Activated CD8-positive, alpha-beta T cell treated with anti-CD3 and anti-CD28 coated beads for 36 hours (primary cell): ENCODE measurements at regions of chr10 and their contacts with region 1.

Region 1: GRCh38 chr10:6083523-6084475 is 5.0 kb upstream of the RBM17 start:
- DNase-seq: peak; percentile 88
- ATAC-seq: peak; percentile 72
- H3K4me3 Mint-ChIP-seq: peak overlapping the region; percentile 78
- H3K27ac Mint-ChIP-seq: peak overlapping the region; percentile 94
- H3K4me1 Mint-ChIP-seq: peaks cover 68% of the 10 kb centered on the region
- H3K27me3 Mint-ChIP-seq: no peaks in the 10 kb centered on the region
- CTCF ChIP-seq: no peak

Region 2: DNA sequence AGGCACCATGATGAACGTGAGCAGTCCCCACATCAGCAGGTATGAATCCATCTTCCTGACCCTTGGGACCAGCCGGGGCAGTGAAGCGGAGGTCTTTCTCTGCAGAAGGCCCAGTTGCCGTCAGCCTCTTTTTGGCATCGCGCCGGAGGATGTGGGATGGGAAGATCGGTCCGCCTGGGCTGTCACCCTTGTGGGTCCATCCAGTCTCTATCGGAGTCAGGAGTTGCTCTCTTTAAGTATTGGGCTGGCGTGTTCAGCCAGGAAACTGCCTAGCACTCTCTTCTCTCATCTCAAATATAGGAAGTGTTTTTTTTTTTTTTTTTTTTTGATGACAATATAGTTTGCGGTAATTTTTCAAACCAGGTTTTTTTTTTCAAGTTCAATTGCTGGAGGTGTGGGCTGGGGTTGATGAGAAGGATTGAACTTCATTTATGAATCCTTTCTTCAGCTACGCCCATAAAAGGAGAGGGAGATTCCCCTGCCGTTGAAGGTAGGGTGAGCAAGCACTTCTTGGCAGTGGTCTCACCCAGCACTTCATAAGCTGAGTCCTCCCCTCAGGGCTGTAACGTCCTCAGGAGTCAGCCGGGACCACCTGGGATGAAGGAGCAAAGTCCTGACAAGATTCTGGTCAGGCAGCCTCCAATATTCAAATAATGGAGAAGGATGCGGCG is 21.6 kb before region 1 on chr10 and contains the start of gene IL2RA:
- CTCF ChIA-PET with region 1: interaction called, 118 read pairs
- POLR2A ChIA-PET with region 1: interaction called, 846 read pairs
- intact Hi-C with region 1: no loop called
- DNase-seq: peak; percentile 85
- ATAC-seq: peak; percentile 75
- H3K4me3 Mint-ChIP-seq: peak within 1 kb of the TSS; percentile 94
- H3K27ac Mint-ChIP-seq: peak within 1 kb of the TSS; percentile 99
- H3K4me1 Mint-ChIP-seq: peaks cover 55% of the 10 kb centered on the region
- H3K27me3 Mint-ChIP-seq: no peaks in the 10 kb centered on the region
- CTCF ChIP-seq: no peak
- total RNA-seq, gene IL2RA: 868 to 874 TPM

Region 3: DNA sequence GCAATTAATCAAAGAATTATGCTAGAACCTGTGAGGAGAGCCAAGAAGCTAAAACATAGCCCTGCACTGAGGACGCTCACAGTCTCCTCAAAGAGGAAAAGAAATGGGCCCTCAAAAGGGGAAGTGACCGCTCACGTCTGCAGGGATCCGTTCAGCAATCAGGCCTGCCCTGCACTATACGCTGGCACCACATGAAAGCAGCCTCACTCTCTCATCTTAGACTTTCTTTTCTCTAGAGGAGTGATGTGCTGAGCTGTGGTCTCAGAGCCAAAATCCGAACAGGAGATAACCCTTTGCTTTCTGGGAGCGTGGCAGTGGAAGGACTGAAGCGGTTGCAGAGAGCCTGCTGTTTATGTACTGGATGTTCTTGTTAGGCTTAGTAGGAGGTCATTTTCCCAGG is 15.4 kb before region 1 on chr10:
- CTCF ChIA-PET with region 1: interaction called, 59 read pairs
- POLR2A ChIA-PET with region 1: interaction called, 188 read pairs
- intact Hi-C with region 1: loop called (anchors 2 kb)
- DNase-seq: peak; percentile 75
- ATAC-seq: peak; percentile 22
- H3K4me3 Mint-ChIP-seq: peak overlapping the region; percentile 77
- H3K27ac Mint-ChIP-seq: peak overlapping the region; percentile 97
- H3K4me1 Mint-ChIP-seq: peaks cover 94% of the 10 kb centered on the region
- H3K27me3 Mint-ChIP-seq: no peaks in the 10 kb centered on the region
- CTCF ChIP-seq: no peak

Region 4: DNA sequence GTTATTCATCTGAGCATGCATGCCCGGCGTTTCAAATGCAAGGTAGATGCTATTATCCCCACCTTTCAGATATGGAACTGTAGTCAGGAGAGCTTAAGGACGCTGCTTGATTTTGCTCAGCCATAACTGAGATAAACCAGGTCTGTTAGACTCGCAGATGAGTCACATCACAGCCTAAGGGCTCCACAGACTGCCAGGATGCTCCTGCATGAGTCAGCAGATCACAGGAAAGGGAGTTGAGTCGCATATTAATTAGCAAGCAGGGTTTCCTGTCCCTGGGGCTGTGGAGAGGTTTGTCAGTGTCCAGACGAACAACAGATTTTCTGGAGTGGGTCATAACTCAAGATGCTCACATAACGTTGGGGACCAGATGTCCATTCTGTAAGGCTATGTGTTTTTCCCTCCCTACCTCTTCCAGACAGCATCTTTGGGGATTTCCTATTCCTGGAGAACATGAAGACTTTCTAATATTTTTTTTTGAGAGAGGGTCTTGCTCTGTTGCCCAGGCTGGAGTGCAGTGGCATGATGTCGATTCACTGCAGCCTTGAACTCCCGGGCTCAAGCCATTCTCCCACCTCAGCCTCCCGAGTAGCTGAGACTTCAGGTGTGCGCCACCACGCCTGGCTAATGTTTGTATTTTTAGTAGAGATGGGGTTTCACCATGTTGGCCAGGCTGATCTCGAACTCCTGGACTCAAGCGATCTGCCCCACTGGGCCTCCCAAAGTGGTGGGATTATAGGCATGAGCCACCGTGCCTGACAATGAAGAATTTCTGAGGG is 155.6 kb after region 1 on chr10:
- CTCF ChIA-PET with region 1: no interaction called
- POLR2A ChIA-PET with region 1: no interaction called
- intact Hi-C with region 1: no loop called
- DNase-seq: peak; percentile 87
- ATAC-seq: peak; percentile 93
- H3K4me3 Mint-ChIP-seq: no peak overlapping the region
- H3K27ac Mint-ChIP-seq: peak overlapping the region; percentile 16
- H3K4me1 Mint-ChIP-seq: peaks cover 19% of the 10 kb centered on the region
- H3K27me3 Mint-ChIP-seq: no peaks in the 10 kb centered on the region
- CTCF ChIP-seq: no peak